Activated T-helper 1 cell treated with anti-CD3 and anti-CD28 coated beads, Interleukin-12 subunit alpha, Interleukin-12 subunit beta, Interleukin-2, Interleukin-4 antibody, amounts not matched to agents 30 ng/mL and 10 ng/mL and 1 ng/mL, durations not matched to agents 14 hours and 24 hours and 36 hours (primary cell): ENCODE measurements at regions of chr9 and their contacts with region 1.

Region 1: DNA sequence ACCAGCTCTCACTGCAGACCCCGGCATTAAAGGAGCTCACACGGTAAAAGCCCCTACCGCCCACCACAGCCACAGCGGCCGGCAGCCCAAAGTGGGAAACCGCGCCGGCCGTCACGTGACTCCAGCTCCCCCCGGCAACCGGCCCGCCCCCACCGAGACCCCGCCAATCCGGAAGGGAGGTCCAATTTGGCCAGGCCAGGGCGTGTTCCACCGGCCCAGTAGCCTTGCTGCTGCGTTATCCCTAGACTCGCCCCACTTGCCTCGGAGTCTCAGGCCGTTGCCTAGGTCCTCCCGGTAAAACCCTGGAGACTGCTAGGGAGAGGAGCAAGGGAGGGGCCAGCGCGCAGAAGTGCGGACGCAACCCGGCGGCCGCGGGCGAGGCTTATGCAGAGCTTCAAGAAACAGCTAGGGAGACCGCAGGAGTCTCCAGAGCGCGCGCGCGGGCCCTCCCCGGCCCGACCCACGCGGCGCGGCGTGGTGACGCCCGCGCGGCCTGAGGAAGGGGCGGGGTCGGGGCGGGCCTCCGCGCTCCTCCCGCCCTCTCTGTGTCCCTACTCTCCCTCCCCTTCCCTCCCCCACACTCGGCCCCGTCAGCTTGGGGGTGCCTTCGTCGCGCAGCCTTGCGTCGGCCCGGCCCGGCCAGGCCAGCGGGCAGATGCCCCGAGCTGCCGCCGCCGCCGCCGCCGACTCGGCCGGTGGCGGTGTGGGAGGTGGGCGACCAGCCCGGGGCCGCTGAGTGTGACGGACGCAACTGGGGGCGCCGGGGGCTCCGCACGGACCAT is at the start of gene RIC1:
- DNase-seq: peak; percentile 90
- H3K4me3 Mint-ChIP-seq: peak within 1 kb of the TSS; percentile 99
- H3K27ac Mint-ChIP-seq: peak within 1 kb of the TSS; percentile 98
- H3K4me1 Mint-ChIP-seq: peaks cover 74% of the 10 kb centered on the region
- H3K27me3 Mint-ChIP-seq: no peaks in the 10 kb centered on the region
- total RNA-seq, gene RIC1: 20.9 and 22.3 TPM in 2 replicates

Region 2: DNA sequence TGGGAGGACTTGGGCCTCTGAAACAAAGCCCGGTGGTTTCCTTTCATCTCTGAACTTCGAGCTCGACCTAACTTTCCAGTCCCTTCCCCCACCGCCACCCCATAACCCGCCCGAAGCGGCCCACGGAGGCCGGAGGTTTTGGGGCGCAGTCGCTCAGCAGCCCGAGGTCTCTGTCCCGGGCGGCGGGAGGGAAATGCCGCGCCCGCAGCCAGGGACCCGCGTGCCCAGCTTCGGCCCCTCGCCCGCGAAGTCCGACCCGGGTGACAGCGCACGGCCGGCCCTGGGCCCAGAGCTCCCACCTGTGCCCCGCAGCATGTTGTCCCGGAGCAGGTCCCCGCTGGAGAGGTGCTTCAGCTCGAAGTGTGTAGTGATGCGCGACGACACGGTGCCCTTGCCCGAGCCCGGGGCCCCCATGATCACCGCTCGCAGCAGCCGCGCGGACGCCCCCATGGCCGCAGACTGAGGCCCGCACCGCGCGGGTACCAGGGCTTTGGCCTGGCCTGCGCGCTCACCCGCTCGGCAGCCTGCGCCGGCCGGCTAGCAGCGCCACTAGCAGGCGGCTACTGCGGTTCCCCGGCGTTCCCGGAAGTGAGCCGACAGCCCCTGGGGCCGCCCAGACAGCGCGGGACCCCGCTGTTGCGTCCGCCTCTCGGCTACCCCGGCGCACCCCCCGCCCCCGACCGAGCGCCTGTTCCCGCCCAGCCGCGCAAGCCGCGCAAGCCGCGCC is 887.9 kb before region 1 on chr9 and contains the start of gene AK3:
- intact Hi-C with region 1: loop called (anchors 1 kb)
- DNase-seq: peak; percentile 81
- H3K4me3 Mint-ChIP-seq: peak within 1 kb of the TSS; percentile 89
- H3K27ac Mint-ChIP-seq: peak within 1 kb of the TSS; percentile 92
- H3K4me1 Mint-ChIP-seq: peaks cover 29% of the 10 kb centered on the region
- H3K27me3 Mint-ChIP-seq: no peaks in the 10 kb centered on the region
- total RNA-seq, gene AK3: 23.9 and 28.5 TPM in 2 replicates

Region 3: GRCh38 chr9:5586391-5586802 is 42.3 kb before region 1 on chr9:
- intact Hi-C with region 1: loop called (anchors 1 kb)
- DNase-seq: peak; percentile 26
- H3K4me3 Mint-ChIP-seq: peak overlapping the region; percentile 35
- H3K27ac Mint-ChIP-seq: peak overlapping the region; percentile 95
- H3K4me1 Mint-ChIP-seq: peaks cover 64% of the 10 kb centered on the region
- H3K27me3 Mint-ChIP-seq: no peaks in the 10 kb centered on the region

Region 4: GRCh38 chr9:5764130-5764868 is 135.6 kb after region 1 on chr9:
- intact Hi-C with region 1: loop called (anchors 2 kb)
- DNase-seq: no peak
- H3K4me3 Mint-ChIP-seq: peak overlapping the region; percentile 25
- H3K27ac Mint-ChIP-seq: peak overlapping the region; percentile 27
- H3K4me1 Mint-ChIP-seq: peaks cover 57% of the 10 kb centered on the region
- H3K27me3 Mint-ChIP-seq: no peaks in the 10 kb centered on the region

Region 5: GRCh38 chr9:5851445-5851844 is 222.7 kb after region 1 on chr9:
- intact Hi-C with region 1: loop called (anchors 1 kb)
- DNase-seq: peak; percentile 49
- H3K4me3 Mint-ChIP-seq: peak overlapping the region; percentile 28
- H3K27ac Mint-ChIP-seq: peak overlapping the region; percentile 68
- H3K4me1 Mint-ChIP-seq: peaks cover 69% of the 10 kb centered on the region
- H3K27me3 Mint-ChIP-seq: no peaks in the 10 kb centered on the region